CD4-positive, alpha-beta memory T cell (primary cell): ENCODE measurements at regions of chr5 and their contacts with region 1.

Region 1: DNA sequence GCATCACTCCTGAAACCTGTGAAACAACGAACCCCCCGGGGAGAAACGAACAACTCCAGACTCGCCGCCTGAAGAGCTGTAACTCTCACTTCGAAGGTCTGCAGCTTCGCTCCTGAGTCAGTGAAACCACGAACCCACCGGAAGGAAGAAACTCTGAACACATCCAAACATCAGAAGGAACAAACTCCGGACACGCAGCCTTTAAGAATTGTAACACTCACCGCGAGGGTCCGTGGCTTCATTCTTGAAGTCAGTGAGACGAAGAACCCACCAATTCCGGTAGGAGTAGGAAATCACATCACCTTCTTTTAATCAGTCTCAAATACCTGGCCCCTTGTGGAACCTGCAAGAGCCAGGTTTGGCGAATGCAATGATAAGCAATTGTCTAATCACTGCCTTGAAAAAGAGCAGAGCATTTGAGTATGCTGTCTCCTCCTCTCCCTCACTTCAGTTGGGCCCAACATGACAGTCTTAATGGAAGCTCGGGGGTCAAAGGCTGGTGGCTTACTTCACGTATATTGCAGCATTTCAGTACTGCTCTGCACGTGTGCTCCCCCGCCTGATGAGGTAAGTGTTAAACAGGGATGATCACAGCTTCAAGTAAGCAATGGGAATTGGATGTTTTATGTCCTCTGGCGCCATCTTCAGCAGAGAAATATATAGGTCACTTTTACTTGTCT is 473 bp downstream of the IRGM start:
- DNase-seq: peak; percentile 76 to 85 (median 77)
- H3K4me3 ChIP-seq: peak overlapping the region in 1 of 2 donors; percentile 40
- H3K4me3 Mint-ChIP-seq: peak overlapping the region; percentile 83 to 91 (median 86)
- H3K27ac ChIP-seq: peak overlapping the region; percentile 50
- H3K27ac Mint-ChIP-seq: peak overlapping the region; percentile 76 to 95 (median 92)
- H3K4me1 ChIP-seq: peaks cover 8% of the 10 kb centered on the region
- H3K4me1 Mint-ChIP-seq: peaks cover 16 to 33% (median 26%) of the 10 kb centered on the region in 4 donors
- H3K27me3 ChIP-seq: no peaks in the 10 kb centered on the region
- H3K27me3 Mint-ChIP-seq: no peaks in the 10 kb centered on the region

Region 2: GRCh38 chr5:150560401-150561193 is 286.2 kb before region 1 on chr5:
- CTCF ChIA-PET with region 1: interaction called, 141 read pairs
- POLR2A ChIA-PET with region 1: interaction called, 3 read pairs
- intact Hi-C with region 1: loop called (anchors 1 kb)
- DNase-seq: peak; percentile 73 to 82 (median 79)
- H3K4me3 ChIP-seq: no peak overlapping the region
- H3K4me3 Mint-ChIP-seq: no peak overlapping the region
- H3K27ac ChIP-seq: no peak overlapping the region
- H3K27ac Mint-ChIP-seq: no peak overlapping the region
- H3K4me1 ChIP-seq: no peaks in the 10 kb centered on the region
- H3K4me1 Mint-ChIP-seq: peaks cover 0 to 1% (median under 1%) of the 10 kb centered on the region in 4 donors
- H3K27me3 ChIP-seq: no peaks in the 10 kb centered on the region
- H3K27me3 Mint-ChIP-seq: peaks cover 0 to 3% of the 10 kb centered on the region in 2 donors

Region 3: DNA sequence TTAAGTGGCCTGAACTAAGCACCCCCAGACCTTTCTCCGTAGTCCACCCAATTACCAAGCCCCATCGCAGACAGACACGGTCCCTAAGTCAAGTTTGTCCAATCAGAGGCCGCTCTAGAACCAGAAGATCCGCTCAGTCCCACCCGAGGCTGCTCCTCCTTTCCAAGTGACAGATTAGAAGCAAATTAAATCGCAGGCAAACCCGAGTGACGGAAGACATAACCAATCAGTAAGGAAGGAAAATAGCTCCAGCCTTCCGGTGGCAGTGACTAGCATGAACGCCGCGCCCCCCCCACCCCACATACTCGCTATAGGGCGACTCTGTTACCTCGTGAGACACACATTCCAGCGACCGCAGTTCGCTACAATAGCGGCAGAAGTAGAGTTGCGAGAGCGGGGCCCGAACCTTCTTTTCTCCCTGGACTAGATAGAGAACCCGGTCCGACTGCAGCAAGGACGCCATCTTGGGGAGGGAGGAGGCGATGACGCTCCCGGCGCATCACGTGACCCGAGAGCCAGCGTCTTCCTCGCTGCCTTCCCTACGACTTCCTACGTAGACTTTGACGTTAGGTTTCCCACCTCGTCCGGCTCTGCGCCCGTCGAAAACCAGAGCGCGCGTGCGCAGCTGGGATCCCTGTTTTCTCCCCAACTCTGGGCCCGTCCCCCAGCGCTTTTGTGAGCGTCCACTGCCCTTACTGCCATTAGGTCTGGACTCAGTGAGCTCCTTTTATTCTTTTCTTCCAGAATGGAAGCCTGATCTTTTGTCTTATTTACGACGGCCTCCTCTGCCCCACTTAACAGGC is 88.1 kb before region 1 on chr5 and contains the start of gene DCTN4:
- CTCF ChIA-PET with region 1: interaction called, 3 read pairs
- POLR2A ChIA-PET with region 1: interaction called, 21 read pairs
- intact Hi-C with region 1: loop called (anchors 1 kb)
- DNase-seq: peak; percentile 94 to 97 (median 96)
- H3K4me3 ChIP-seq: peak within 1 kb of the TSS; percentile 78 to 88
- H3K4me3 Mint-ChIP-seq: peak within 1 kb of the TSS in 1 of 8 donors; percentile 7
- H3K27ac ChIP-seq: peak within 1 kb of the TSS; percentile 94
- H3K27ac Mint-ChIP-seq: no peak within 1 kb of the TSS
- H3K4me1 ChIP-seq: peaks cover 29% of the 10 kb centered on the region
- H3K4me1 Mint-ChIP-seq: peaks cover 24 to 36% (median 32%) of the 10 kb centered on the region in 4 donors
- H3K27me3 ChIP-seq: no peaks in the 10 kb centered on the region
- H3K27me3 Mint-ChIP-seq: no peaks in the 10 kb centered on the region
- total RNA-seq, gene DCTN4: 45.5 to 46.0 TPM

Region 4: GRCh38 chr5:150801117-150801927 is 45.5 kb before region 1 on chr5:
- CTCF ChIA-PET with region 1: interaction called, 43 read pairs
- POLR2A ChIA-PET with region 1: interaction called, 5 read pairs
- intact Hi-C with region 1: loop called (anchors 1 kb)
- DNase-seq: peak in 4 of 5 donors; percentile 42 to 50 (median 44)
- H3K4me3 ChIP-seq: no peak overlapping the region
- H3K4me3 Mint-ChIP-seq: no peak overlapping the region
- H3K27ac ChIP-seq: no peak overlapping the region
- H3K27ac Mint-ChIP-seq: peak overlapping the region in 2 of 7 donors; percentile 37 to 55
- H3K4me1 ChIP-seq: peaks cover 8% of the 10 kb centered on the region
- H3K4me1 Mint-ChIP-seq: peaks cover 3 to 5% (median 5%) of the 10 kb centered on the region in 4 donors
- H3K27me3 ChIP-seq: no peaks in the 10 kb centered on the region
- H3K27me3 Mint-ChIP-seq: peaks cover 3 to 6% of the 10 kb centered on the region in 2 donors

Region 5: GRCh38 chr5:150946351-150946905 is 99.6 kb after region 1 on chr5:
- CTCF ChIA-PET with region 1: no interaction called
- POLR2A ChIA-PET with region 1: no interaction called
- intact Hi-C with region 1: no loop called
- DNase-seq: no peak
- H3K4me3 ChIP-seq: no peak overlapping the region
- H3K4me3 Mint-ChIP-seq: no peak overlapping the region
- H3K27ac ChIP-seq: no peak overlapping the region
- H3K27ac Mint-ChIP-seq: peak overlapping the region in 1 of 7 donors; percentile 42
- H3K4me1 ChIP-seq: no peaks in the 10 kb centered on the region
- H3K4me1 Mint-ChIP-seq: no peaks in the 10 kb centered on the region
- H3K27me3 ChIP-seq: no peaks in the 10 kb centered on the region
- H3K27me3 Mint-ChIP-seq: peaks cover 3 to 12% of the 10 kb centered on the region in 2 donors